Activated B cell treated with CpG ODN at 0.5 μM for 24 hours (primary cell): ENCODE measurements at regions of chr16 and their contacts with region 1.

Region 1: GRCh38 chr16:57648590-57649442 is 19.3 kb upstream of the ADGRG3 start:
- DNase-seq: peak; percentile 67
- ATAC-seq: peak; percentile 87
- H3K4me3 Mint-ChIP-seq: no peak overlapping the region
- H3K27ac Mint-ChIP-seq: no peak overlapping the region
- H3K4me1 Mint-ChIP-seq: peaks cover 25% of the 10 kb centered on the region
- H3K27me3 Mint-ChIP-seq: peaks cover 2% of the 10 kb centered on the region
- CTCF ChIP-seq: peak; percentile 85

Region 2: DNA sequence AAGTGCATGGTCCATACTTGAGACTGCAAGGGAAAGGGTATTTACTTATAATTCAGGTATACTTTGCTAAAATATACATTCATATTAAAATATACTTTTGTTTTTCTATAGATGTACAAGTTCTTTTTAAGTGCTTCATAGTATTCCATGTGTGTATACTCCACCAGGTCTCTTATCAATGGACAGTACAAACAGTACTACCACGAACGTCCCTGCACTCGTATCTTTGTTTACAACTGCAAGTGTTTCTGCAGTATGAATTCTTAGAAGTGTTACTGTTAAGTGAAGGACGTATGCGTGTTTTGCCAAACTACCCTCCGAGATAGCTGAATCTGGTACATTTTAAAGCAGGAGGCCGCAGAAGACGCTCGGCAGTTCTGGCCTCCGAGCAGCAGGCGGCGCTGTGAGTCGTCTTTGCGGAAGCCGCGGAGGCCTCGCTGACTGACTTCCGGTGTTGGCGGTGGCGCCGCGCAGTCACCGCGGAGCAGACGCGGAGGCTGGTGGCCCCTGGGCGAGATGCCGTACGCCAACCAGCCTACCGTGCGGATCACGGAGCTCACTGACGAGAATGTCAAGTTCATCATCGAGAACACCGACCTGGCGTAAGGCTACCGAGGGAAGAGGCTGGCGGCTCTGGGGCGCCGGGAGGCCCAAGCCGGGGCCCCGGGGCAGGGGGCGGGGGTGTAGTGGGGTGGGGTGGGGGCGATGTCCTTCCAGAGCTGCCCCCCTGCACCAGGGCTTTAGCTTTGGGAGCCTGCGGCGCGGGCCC is 186.4 kb before region 1 on chr16 and contains the start of gene POLR2C:
- CTCF ChIA-PET with region 1: no interaction called
- POLR2A ChIA-PET with region 1: no interaction called
- intact Hi-C with region 1: loop called (anchors 1 kb)
- DNase-seq: peak; percentile 93
- ATAC-seq: peak; percentile 97
- H3K4me3 Mint-ChIP-seq: peak within 1 kb of the TSS; percentile 100
- H3K27ac Mint-ChIP-seq: peak within 1 kb of the TSS; percentile 99
- H3K4me1 Mint-ChIP-seq: peaks cover 29% of the 10 kb centered on the region
- H3K27me3 Mint-ChIP-seq: no peaks in the 10 kb centered on the region
- CTCF ChIP-seq: peak; percentile 38
- total RNA-seq, gene POLR2C: 52.2 and 56.6 TPM in 2 replicates

Region 3: DNA sequence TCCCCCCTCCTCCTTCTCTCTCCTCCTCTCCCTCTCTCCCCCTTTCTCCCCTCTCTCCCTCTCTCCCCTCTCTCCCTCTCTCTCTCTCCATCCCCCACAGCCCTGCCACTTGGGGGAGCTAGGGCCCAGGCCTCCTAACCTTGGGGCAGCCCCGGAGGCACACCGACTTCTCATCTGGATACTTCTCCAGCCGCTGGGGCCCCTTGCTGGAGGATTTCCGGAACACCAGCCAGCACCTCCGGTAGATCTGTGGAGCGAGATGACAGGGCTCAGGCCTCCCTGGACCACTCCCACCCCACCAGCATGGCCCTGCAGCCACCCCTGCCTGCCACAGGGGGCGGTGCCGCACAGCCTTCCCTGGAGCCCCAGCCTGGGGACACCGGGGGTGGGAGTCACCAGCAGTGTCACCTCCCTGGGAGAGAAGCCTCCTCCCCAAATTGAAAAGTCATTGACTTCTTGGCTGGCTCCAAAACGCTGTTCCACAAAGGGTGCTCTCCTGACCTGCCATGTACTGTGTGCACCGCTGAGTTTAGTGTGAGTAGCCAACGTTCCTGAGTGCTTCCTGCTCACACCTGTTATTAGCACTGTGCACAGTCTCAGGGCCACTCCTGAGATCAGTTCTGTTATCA is 173.0 kb before region 1 on chr16:
- CTCF ChIA-PET with region 1: interaction called, 4 read pairs
- POLR2A ChIA-PET with region 1: no interaction called
- intact Hi-C with region 1: loop called (anchors 2 kb)
- DNase-seq: peak; percentile 69
- ATAC-seq: peak; percentile 92
- H3K4me3 Mint-ChIP-seq: no peak overlapping the region
- H3K27ac Mint-ChIP-seq: no peak overlapping the region
- H3K4me1 Mint-ChIP-seq: peaks cover 40% of the 10 kb centered on the region
- H3K27me3 Mint-ChIP-seq: peaks cover 7% of the 10 kb centered on the region
- CTCF ChIP-seq: peak; percentile 51

Region 4: DNA sequence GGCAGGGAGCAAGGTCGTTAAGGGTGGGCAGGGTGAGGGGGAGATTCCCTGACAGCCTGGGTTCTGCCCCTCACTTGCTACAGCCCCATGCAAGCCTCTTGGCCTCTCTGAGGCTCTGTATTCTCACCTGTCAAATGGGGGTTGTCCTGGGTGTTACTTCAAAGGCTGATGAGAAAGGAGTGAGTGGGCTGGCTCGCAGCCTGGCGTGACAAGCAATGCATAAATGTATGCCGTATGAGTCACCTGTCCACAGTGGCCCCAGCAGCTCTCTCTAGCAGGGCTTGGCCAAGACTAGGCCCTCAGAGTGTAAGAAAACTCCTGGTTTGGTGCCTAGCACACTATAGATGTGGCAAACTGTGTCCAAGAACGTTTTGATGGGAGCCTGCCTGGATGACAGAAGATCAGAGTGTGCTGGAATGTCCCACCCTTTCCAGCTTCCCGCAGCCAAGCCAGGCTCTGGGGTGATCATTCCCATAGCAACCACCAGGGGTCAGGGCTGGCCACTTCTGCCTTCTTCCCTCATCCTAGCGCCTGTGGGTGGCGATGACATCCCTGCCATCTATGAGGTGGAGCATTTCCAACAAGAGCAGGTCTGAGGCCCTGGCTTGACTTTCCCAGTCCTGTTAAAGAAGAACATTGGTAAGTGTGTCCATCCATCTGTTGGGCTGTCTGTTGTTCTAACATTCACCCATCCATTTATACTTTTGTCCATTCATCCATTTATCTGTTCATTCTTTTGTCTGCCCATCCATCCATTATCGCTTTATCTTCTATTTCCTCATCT is 57.5 kb before region 1 on chr16:
- CTCF ChIA-PET with region 1: interaction called, 3 read pairs
- POLR2A ChIA-PET with region 1: no interaction called
- intact Hi-C with region 1: loop called (anchors 1 kb)
- DNase-seq: no peak
- ATAC-seq: peak; percentile 90
- H3K4me3 Mint-ChIP-seq: no peak overlapping the region
- H3K27ac Mint-ChIP-seq: no peak overlapping the region
- H3K4me1 Mint-ChIP-seq: peaks cover 21% of the 10 kb centered on the region
- H3K27me3 Mint-ChIP-seq: peaks cover 11% of the 10 kb centered on the region
- CTCF ChIP-seq: no peak

Region 5: GRCh38 chr16:57600048-57600835 is 48.6 kb before region 1 on chr16:
- CTCF ChIA-PET with region 1: interaction called, 5 read pairs
- POLR2A ChIA-PET with region 1: no interaction called
- intact Hi-C with region 1: loop called (anchors 2 kb)
- DNase-seq: no peak
- ATAC-seq: peak; percentile 71
- H3K4me3 Mint-ChIP-seq: no peak overlapping the region
- H3K27ac Mint-ChIP-seq: no peak overlapping the region
- H3K4me1 Mint-ChIP-seq: peaks cover 11% of the 10 kb centered on the region
- H3K27me3 Mint-ChIP-seq: peaks cover 14% of the 10 kb centered on the region
- CTCF ChIP-seq: no peak

Region 6: GRCh38 chr16:57628008-57628781 is 20.6 kb before region 1 on chr16 and contains the start of gene ADGRG1:
- CTCF ChIA-PET with region 1: no interaction called
- POLR2A ChIA-PET with region 1: no interaction called
- intact Hi-C with region 1: no loop called
- DNase-seq: no peak
- ATAC-seq: peak; percentile 52
- H3K4me3 Mint-ChIP-seq: no peak within 1 kb of the TSS
- H3K27ac Mint-ChIP-seq: no peak within 1 kb of the TSS
- H3K4me1 Mint-ChIP-seq: peaks cover 4% of the 10 kb centered on the region
- H3K27me3 Mint-ChIP-seq: peaks cover 42% of the 10 kb centered on the region
- CTCF ChIP-seq: no peak
- total RNA-seq, gene ADGRG1: 0.13 and 0.15 TPM in 2 replicates

Region 7: GRCh38 chr16:57720142-57720575 is 71.3 kb after region 1 on chr16:
- CTCF ChIA-PET with region 1: no interaction called
- POLR2A ChIA-PET with region 1: no interaction called
- intact Hi-C with region 1: loop called (anchors 2 kb)
- DNase-seq: no peak
- ATAC-seq: peak; percentile 57
- H3K4me3 Mint-ChIP-seq: no peak overlapping the region
- H3K27ac Mint-ChIP-seq: no peak overlapping the region
- H3K4me1 Mint-ChIP-seq: peaks cover 3% of the 10 kb centered on the region
- H3K27me3 Mint-ChIP-seq: peaks cover 11% of the 10 kb centered on the region
- CTCF ChIP-seq: no peak